Activated CD8-positive, alpha-beta T cell treated with anti-CD3 and anti-CD28 coated beads for 36 hours (primary cell): ENCODE measurements at regions of chr10 and their contacts with region 1.

Region 1: DNA sequence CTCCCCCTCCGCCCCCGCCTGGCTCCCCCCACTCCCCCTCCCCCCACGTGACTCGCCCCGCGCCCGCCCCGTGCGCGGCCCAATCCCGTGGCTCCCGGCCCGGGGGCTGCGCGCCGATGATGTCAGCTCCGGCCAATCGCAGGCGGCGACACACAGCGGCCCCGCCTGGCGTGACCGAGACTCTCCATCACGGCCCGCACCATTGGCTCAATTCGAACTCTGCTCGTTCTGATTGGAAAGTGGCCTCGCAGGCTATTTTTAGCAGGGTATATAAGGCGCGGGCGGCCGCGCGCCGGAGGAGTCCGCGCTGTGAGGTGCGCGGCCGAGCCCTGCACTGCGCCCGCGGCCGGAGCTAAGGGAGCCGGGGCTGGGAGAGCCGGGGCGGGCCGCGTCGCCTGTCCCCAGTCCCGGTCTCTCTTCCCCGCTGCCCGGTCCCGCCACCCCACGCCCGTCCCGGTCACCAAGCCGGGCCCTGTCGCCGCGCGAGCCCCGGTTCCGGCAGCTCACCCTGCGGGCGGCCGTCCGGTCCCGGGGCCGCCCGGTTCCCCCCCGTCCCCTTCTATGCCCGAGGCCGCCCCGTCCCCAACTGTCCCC is 345 bp upstream of the KLF6 start:
- DNase-seq: peak; percentile 99
- ATAC-seq: peak; percentile 83
- H3K4me3 Mint-ChIP-seq: peak overlapping the region; percentile 93
- H3K27ac Mint-ChIP-seq: peak overlapping the region; percentile 99
- H3K4me1 Mint-ChIP-seq: peaks cover 34% of the 10 kb centered on the region
- H3K27me3 Mint-ChIP-seq: no peaks in the 10 kb centered on the region
- CTCF ChIP-seq: no peak

Region 2: GRCh38 chr10:3765146-3765545 is 20.2 kb before region 1 on chr10:
- CTCF ChIA-PET with region 1: interaction called, 5 read pairs
- POLR2A ChIA-PET with region 1: interaction called, 14 read pairs
- intact Hi-C with region 1: no loop called
- DNase-seq: peak; percentile 52
- ATAC-seq: peak; percentile 58
- H3K4me3 Mint-ChIP-seq: peak overlapping the region; percentile 28
- H3K27ac Mint-ChIP-seq: peak overlapping the region; percentile 14
- H3K4me1 Mint-ChIP-seq: peaks cover 62% of the 10 kb centered on the region
- H3K27me3 Mint-ChIP-seq: peaks cover 2% of the 10 kb centered on the region
- CTCF ChIP-seq: no peak

Region 3: GRCh38 chr10:3811291-3811870 is 26.0 kb after region 1 on chr10:
- CTCF ChIA-PET with region 1: interaction called, 4 read pairs
- POLR2A ChIA-PET with region 1: interaction called, 281 read pairs
- intact Hi-C with region 1: no loop called
- DNase-seq: peak; percentile 78
- ATAC-seq: peak; percentile 56
- H3K4me3 Mint-ChIP-seq: peak overlapping the region; percentile 59
- H3K27ac Mint-ChIP-seq: no peak overlapping the region
- H3K4me1 Mint-ChIP-seq: peaks cover 68% of the 10 kb centered on the region
- H3K27me3 Mint-ChIP-seq: no peaks in the 10 kb centered on the region
- CTCF ChIP-seq: no peak

Region 4: GRCh38 chr10:3828404-3829155 is 43.2 kb after region 1 on chr10:
- CTCF ChIA-PET with region 1: interaction called, 4 read pairs
- POLR2A ChIA-PET with region 1: interaction called, 108 read pairs
- intact Hi-C with region 1: no loop called
- DNase-seq: peak; percentile 83
- ATAC-seq: peak; percentile 68
- H3K4me3 Mint-ChIP-seq: peak overlapping the region; percentile 56
- H3K27ac Mint-ChIP-seq: peak overlapping the region; percentile 97
- H3K4me1 Mint-ChIP-seq: peaks cover 58% of the 10 kb centered on the region
- H3K27me3 Mint-ChIP-seq: no peaks in the 10 kb centered on the region
- CTCF ChIP-seq: no peak

Region 5: DNA sequence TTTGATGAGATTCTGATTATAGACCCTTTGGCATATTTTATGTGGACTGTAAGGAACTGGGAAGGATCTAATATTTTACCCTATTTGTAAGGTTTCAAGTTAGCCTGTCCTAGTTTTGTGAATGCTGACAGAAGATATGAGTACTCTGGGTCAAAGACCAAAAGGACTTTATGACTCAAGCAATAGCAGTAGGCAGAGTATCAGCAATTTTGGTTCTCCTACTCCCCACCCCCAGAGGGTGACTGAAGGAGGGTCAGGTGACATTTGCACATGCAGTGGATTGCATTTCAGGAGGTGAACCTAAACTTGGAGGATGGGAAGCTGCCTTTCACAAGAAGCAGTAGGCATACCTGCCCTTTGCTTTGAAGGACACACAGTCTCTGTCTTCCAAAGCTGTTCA is 83.7 kb after region 1 on chr10:
- CTCF ChIA-PET with region 1: no interaction called
- POLR2A ChIA-PET with region 1: interaction called, 56 read pairs
- intact Hi-C with region 1: no loop called
- DNase-seq: no peak
- ATAC-seq: peak; percentile 18
- H3K4me3 Mint-ChIP-seq: no peak overlapping the region
- H3K27ac Mint-ChIP-seq: peak overlapping the region; percentile 53
- H3K4me1 Mint-ChIP-seq: peaks cover 63% of the 10 kb centered on the region
- H3K27me3 Mint-ChIP-seq: no peaks in the 10 kb centered on the region
- CTCF ChIP-seq: no peak

Region 6: GRCh38 chr10:3935141-3935540 is 149.8 kb after region 1 on chr10:
- CTCF ChIA-PET with region 1: no interaction called
- POLR2A ChIA-PET with region 1: interaction called, 26 read pairs
- intact Hi-C with region 1: no loop called
- DNase-seq: peak; percentile 91
- ATAC-seq: peak; percentile 98
- H3K4me3 Mint-ChIP-seq: peak overlapping the region; percentile 10
- H3K27ac Mint-ChIP-seq: peak overlapping the region; percentile 91
- H3K4me1 Mint-ChIP-seq: peaks cover 53% of the 10 kb centered on the region
- H3K27me3 Mint-ChIP-seq: no peaks in the 10 kb centered on the region
- CTCF ChIP-seq: no peak

Region 7: DNA sequence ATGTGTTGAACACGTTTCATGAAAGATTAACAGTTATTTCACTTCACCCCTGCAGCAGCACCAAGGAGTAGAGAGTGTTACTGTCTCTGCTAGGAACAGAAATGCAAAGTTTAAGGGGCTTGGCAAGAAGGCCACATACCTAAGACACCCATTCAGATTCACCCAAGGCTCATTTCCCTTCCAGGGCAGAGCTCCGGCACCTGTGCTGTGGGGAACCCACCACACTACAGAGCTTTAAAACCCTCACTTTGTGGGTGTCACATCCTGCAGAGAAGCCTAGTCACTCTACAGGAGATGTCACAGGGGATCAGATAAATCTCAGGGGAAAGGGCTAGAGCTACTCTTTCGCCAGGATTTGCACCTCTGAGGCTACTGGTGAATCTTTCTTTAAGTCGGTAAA is 175.7 kb after region 1 on chr10:
- CTCF ChIA-PET with region 1: no interaction called
- POLR2A ChIA-PET with region 1: interaction called, 11 read pairs
- intact Hi-C with region 1: no loop called
- DNase-seq: peak; percentile 77
- ATAC-seq: peak; percentile 98
- H3K4me3 Mint-ChIP-seq: peak overlapping the region; percentile 18
- H3K27ac Mint-ChIP-seq: peak overlapping the region; percentile 57
- H3K4me1 Mint-ChIP-seq: peaks cover 32% of the 10 kb centered on the region
- H3K27me3 Mint-ChIP-seq: no peaks in the 10 kb centered on the region
- CTCF ChIP-seq: no peak

Region 8: GRCh38 chr10:3995302-3996210 is 210.2 kb after region 1 on chr10:
- CTCF ChIA-PET with region 1: no interaction called
- POLR2A ChIA-PET with region 1: no interaction called
- intact Hi-C with region 1: no loop called
- DNase-seq: no peak
- ATAC-seq: no peak
- H3K4me3 Mint-ChIP-seq: no peak overlapping the region
- H3K27ac Mint-ChIP-seq: no peak overlapping the region
- H3K4me1 Mint-ChIP-seq: peaks cover 7% of the 10 kb centered on the region
- H3K27me3 Mint-ChIP-seq: no peaks in the 10 kb centered on the region
- CTCF ChIP-seq: no peak